OCI-LY7 (cell line): ENCODE measurements at regions of chr6 and their contacts with region 1.

Region 1: GRCh38 chr6:87139236-87139635 is 16.1 kb upstream of the ZNF292 start:
- DNase-seq: peak; percentile 67
- H3K4me3 ChIP-seq: no peak overlapping the region
- H3K27ac ChIP-seq: no peak overlapping the region
- H3K4me1 ChIP-seq: no peaks in the 10 kb centered on the region
- CTCF ChIP-seq: peak; percentile 90

Region 2: GRCh38 chr6:87154993-87155841 is 16.0 kb after region 1 on chr6 and contains the start of gene ZNF292:
- CTCF ChIA-PET with region 1: no interaction called
- POLR2A ChIA-PET with region 1: no interaction called
- intact Hi-C with region 1: no loop called
- DNase-seq: peak; percentile 99
- H3K4me3 ChIP-seq: peak within 1 kb of the TSS; percentile 81
- H3K27ac ChIP-seq: peak within 1 kb of the TSS; percentile 83
- H3K4me1 ChIP-seq: peaks cover 37% of the 10 kb centered on the region
- CTCF ChIP-seq: 0 out of 2 replicates have a peak, but pooled peaks have one; percentile 27
- total RNA-seq, gene ZNF292: 17.5 and 18.7 TPM in 2 replicates

Region 3: GRCh38 chr6:87237804-87238203 is 98.6 kb after region 1 on chr6:
- CTCF ChIA-PET with region 1: no interaction called
- POLR2A ChIA-PET with region 1: no interaction called
- intact Hi-C with region 1: loop called (anchors 5 kb)
- DNase-seq: peak; percentile 27
- H3K4me3 ChIP-seq: no peak overlapping the region
- H3K27ac ChIP-seq: no peak overlapping the region
- H3K4me1 ChIP-seq: no peaks in the 10 kb centered on the region
- CTCF ChIP-seq: peak; percentile 85

Region 4: DNA sequence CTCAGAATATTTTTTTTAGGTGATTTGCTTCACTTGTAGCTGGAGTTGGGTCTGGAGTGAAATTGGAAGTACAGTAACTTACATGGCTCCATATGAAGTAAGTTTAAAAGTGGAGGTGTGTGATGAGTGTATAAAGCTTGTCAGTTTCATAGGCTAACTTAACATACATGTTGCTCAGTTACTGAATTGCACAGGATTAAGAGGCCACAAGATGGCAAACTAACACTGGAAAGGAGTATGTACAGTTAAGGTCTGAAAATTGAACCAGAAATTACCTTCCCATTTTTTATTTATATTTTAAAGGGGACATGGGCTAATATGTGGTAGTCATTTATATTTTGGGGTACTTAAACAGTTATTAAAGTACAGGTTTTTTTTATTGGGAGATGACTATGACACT is 137.9 kb after region 1 on chr6:
- CTCF ChIA-PET with region 1: no interaction called
- POLR2A ChIA-PET with region 1: interaction called, 4 read pairs
- intact Hi-C with region 1: loop called (anchors 10 kb)
- DNase-seq: peak; percentile 37
- H3K4me3 ChIP-seq: no peak overlapping the region
- H3K27ac ChIP-seq: no peak overlapping the region
- H3K4me1 ChIP-seq: no peaks in the 10 kb centered on the region
- CTCF ChIP-seq: peak; percentile 74